Naive thymus-derived CD4-positive, alpha-beta T cell (primary cell): ENCODE measurements at regions of chr5 and their contacts with region 1.

Region 1: DNA sequence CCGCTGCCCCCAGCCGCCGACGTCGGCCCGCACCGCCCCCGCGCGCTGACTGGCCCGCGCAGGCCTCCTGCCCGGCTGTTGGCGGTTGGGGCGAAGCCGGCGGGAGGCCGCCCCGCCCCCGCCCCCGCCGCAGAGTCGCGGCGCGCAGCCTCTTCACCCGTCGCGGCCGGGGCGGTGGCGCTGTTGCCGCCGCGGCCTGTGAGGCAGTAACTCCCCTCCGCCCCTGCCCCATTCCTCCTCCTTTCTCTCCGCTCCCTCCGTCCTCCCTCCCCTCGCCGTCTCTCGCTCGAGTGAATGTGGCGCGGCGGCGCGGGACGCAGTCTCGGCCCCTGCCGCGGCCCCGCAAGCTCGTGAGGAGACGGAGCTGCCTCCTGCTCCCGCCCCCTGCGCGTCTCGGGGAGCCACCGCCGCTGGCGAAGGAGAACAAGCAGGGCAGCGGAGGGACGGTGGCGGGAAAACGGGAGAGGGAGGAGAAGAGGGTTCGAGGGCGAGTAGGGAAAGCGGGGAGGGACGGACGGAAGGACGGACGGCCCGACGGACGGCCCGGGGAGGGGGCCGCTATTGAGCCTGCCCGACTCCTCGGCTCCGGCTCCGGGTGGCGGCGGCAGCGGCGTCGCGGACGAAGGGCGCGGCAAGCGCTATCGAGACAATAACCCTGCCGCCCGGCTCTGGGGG is 637 bp upstream of the ERBIN start:
- DNase-seq: peak; percentile 72 to 85 (median 81)
- ATAC-seq: peak; percentile 87
- H3K4me3 ChIP-seq: peak overlapping the region; percentile 81
- H3K4me3 Mint-ChIP-seq: peak overlapping the region; percentile 88 to 98 (median 93)
- H3K27ac ChIP-seq: peak overlapping the region; percentile 96
- H3K27ac Mint-ChIP-seq: peak overlapping the region; percentile 64 to 97 (median 95)
- H3K4me1 ChIP-seq: peaks cover 17 to 19% of the 10 kb centered on the region in 2 donors
- H3K4me1 Mint-ChIP-seq: peaks cover 29 to 43% (median 40%) of the 10 kb centered on the region in 7 donors
- H3K27me3 ChIP-seq: no peaks in the 10 kb centered on the region
- H3K27me3 Mint-ChIP-seq: peaks cover 0 to 29% (median 0%) of the 10 kb centered on the region in 5 donors

Region 2: GRCh38 chr5:65252977-65253376 is 672.8 kb before region 1 on chr5:
- CTCF ChIA-PET with region 1: no interaction called
- POLR2A ChIA-PET with region 1: no interaction called
- intact Hi-C with region 1: no loop called
- DNase-seq: no peak
- ATAC-seq: no peak
- H3K4me3 ChIP-seq: no peak overlapping the region
- H3K4me3 Mint-ChIP-seq: no peak overlapping the region
- H3K27ac ChIP-seq: no peak overlapping the region
- H3K27ac Mint-ChIP-seq: no peak overlapping the region
- H3K4me1 ChIP-seq: no peaks in the 10 kb centered on the region
- H3K4me1 Mint-ChIP-seq: no peaks in the 10 kb centered on the region
- H3K27me3 ChIP-seq: no peaks in the 10 kb centered on the region
- H3K27me3 Mint-ChIP-seq: no peaks in the 10 kb centered on the region

Region 3: GRCh38 chr5:65624571-65625555 is 300.9 kb before region 1 on chr5 and contains the starts of genes SHLD3 and TRAPPC13:
- CTCF ChIA-PET with region 1: no interaction called
- POLR2A ChIA-PET with region 1: interaction called, 4 read pairs
- intact Hi-C with region 1: loop called (anchors 1 kb)
- DNase-seq: peak; percentile 57 to 92 (median 91)
- ATAC-seq: peak; percentile 86
- H3K4me3 ChIP-seq: peak within 1 kb of the TSS; percentile 75
- H3K4me3 Mint-ChIP-seq: peak within 1 kb of the TSS; percentile 93 to 100 (median 98)
- H3K27ac ChIP-seq: peak within 1 kb of the TSS; percentile 92
- H3K27ac Mint-ChIP-seq: peak within 1 kb of the TSS; percentile 97 to 100 (median 98)
- H3K4me1 ChIP-seq: peaks cover 20% of the 10 kb centered on the region in 2 donors
- H3K4me1 Mint-ChIP-seq: peaks cover 14 to 73% (median 51%) of the 10 kb centered on the region in 7 donors
- H3K27me3 ChIP-seq: no peaks in the 10 kb centered on the region
- H3K27me3 Mint-ChIP-seq: peaks cover 0 to 3% (median 0%) of the 10 kb centered on the region in 5 donors
- total RNA-seq, gene SHLD3: 4.8 to 11.3 (median 5.8) TPM
- total RNA-seq, gene TRAPPC13: 18.2 to 23.1 (median 20.8) TPM

Region 4: GRCh38 chr5:65779643-65780042 is 146.1 kb before region 1 on chr5:
- CTCF ChIA-PET with region 1: no interaction called
- POLR2A ChIA-PET with region 1: interaction called, 3 read pairs
- intact Hi-C with region 1: loop called (anchors 2 to 5 kb)
- DNase-seq: peak in 4 of 9 donors; percentile 10 to 28 (median 16)
- ATAC-seq: peak; percentile 29
- H3K4me3 ChIP-seq: no peak overlapping the region
- H3K4me3 Mint-ChIP-seq: peak overlapping the region; percentile 40 to 71 (median 56)
- H3K27ac ChIP-seq: no peak overlapping the region
- H3K27ac Mint-ChIP-seq: peak overlapping the region; percentile 24 to 91 (median 78)
- H3K4me1 ChIP-seq: peaks cover 0 to 9% of the 10 kb centered on the region in 2 donors
- H3K4me1 Mint-ChIP-seq: peaks cover 17 to 29% (median 24%) of the 10 kb centered on the region in 7 donors
- H3K27me3 ChIP-seq: no peaks in the 10 kb centered on the region
- H3K27me3 Mint-ChIP-seq: no peaks in the 10 kb centered on the region

Region 5: DNA sequence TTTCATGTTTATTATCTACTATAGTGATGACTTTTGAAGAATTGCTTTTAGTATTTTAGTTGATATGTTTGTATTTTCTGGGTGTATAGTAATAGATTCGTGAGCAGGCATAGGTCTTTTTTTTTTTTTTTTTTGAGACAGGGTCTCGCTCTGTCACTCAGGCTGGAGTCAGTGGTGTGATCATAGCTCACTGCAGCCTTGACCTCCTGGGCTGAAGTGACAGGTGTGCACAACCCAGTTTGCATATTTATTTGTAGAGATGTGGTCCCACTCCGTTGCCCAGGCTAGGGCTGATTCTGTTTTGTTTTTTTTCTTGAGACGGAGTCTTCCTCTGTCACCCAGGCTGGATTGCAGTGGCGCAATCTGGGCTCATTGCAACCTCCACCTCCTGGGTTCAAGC is 12.5 kb after region 1 on chr5:
- CTCF ChIA-PET with region 1: interaction called, 4 read pairs
- POLR2A ChIA-PET with region 1: interaction called, 6 read pairs
- intact Hi-C with region 1: loop called in 1 of 2 experiments (anchors 1 kb)
- DNase-seq: no peak
- ATAC-seq: no peak
- H3K4me3 ChIP-seq: no peak overlapping the region
- H3K4me3 Mint-ChIP-seq: peak overlapping the region in 4 of 10 donors; percentile 10 to 54 (median 38)
- H3K27ac ChIP-seq: no peak overlapping the region
- H3K27ac Mint-ChIP-seq: peak overlapping the region in 7 of 9 donors; percentile 2 to 72 (median 55)
- H3K4me1 ChIP-seq: peaks cover 18 to 24% of the 10 kb centered on the region in 2 donors
- H3K4me1 Mint-ChIP-seq: peaks cover 19 to 77% (median 54%) of the 10 kb centered on the region in 7 donors
- H3K27me3 ChIP-seq: no peaks in the 10 kb centered on the region
- H3K27me3 Mint-ChIP-seq: no peaks in the 10 kb centered on the region

Region 6: GRCh38 chr5:65967288-65968066 is 41.7 kb after region 1 on chr5:
- CTCF ChIA-PET with region 1: no interaction called
- POLR2A ChIA-PET with region 1: interaction called, 6 read pairs
- intact Hi-C with region 1: loop called in 1 of 2 experiments (anchors 5 kb)
- DNase-seq: peak in 1 of 9 donors; percentile 11
- ATAC-seq: peak; percentile 22
- H3K4me3 ChIP-seq: no peak overlapping the region
- H3K4me3 Mint-ChIP-seq: peak overlapping the region in 9 of 10 donors; percentile 4 to 74 (median 49)
- H3K27ac ChIP-seq: no peak overlapping the region
- H3K27ac Mint-ChIP-seq: peak overlapping the region in 7 of 9 donors; percentile 19 to 81 (median 68)
- H3K4me1 ChIP-seq: peaks cover 33 to 39% of the 10 kb centered on the region in 2 donors
- H3K4me1 Mint-ChIP-seq: peaks cover 46 to 92% (median 66%) of the 10 kb centered on the region in 7 donors
- H3K27me3 ChIP-seq: no peaks in the 10 kb centered on the region
- H3K27me3 Mint-ChIP-seq: no peaks in the 10 kb centered on the region

Region 7: GRCh38 chr5:66171349-66172344 is 245.9 kb after region 1 on chr5:
- CTCF ChIA-PET with region 1: no interaction called
- POLR2A ChIA-PET with region 1: interaction called, 3 read pairs
- intact Hi-C with region 1: loop called (anchors 1 to 10 kb)
- DNase-seq: peak in 7 of 9 donors; percentile 69 to 85 (median 80)
- ATAC-seq: peak; percentile 89
- H3K4me3 ChIP-seq: no peak overlapping the region
- H3K4me3 Mint-ChIP-seq: peak overlapping the region in 6 of 10 donors; percentile 5 to 48 (median 38)
- H3K27ac ChIP-seq: peak overlapping the region; percentile 43
- H3K27ac Mint-ChIP-seq: peak overlapping the region; percentile 69 to 93 (median 90)
- H3K4me1 ChIP-seq: peaks cover 7 to 8% of the 10 kb centered on the region in 2 donors
- H3K4me1 Mint-ChIP-seq: peaks cover 9 to 39% (median 28%) of the 10 kb centered on the region in 7 donors
- H3K27me3 ChIP-seq: no peaks in the 10 kb centered on the region
- H3K27me3 Mint-ChIP-seq: no peaks in the 10 kb centered on the region

Region 8: GRCh38 chr5:66209350-66209749 is 283.6 kb after region 1 on chr5:
- CTCF ChIA-PET with region 1: no interaction called
- POLR2A ChIA-PET with region 1: no interaction called
- intact Hi-C with region 1: no loop called
- DNase-seq: no peak
- ATAC-seq: no peak
- H3K4me3 ChIP-seq: no peak overlapping the region
- H3K4me3 Mint-ChIP-seq: no peak overlapping the region
- H3K27ac ChIP-seq: no peak overlapping the region
- H3K27ac Mint-ChIP-seq: no peak overlapping the region
- H3K4me1 ChIP-seq: no peaks in the 10 kb centered on the region
- H3K4me1 Mint-ChIP-seq: peaks cover 0 to 2% (median 0%) of the 10 kb centered on the region in 7 donors
- H3K27me3 ChIP-seq: no peaks in the 10 kb centered on the region
- H3K27me3 Mint-ChIP-seq: no peaks in the 10 kb centered on the region

Region 9: GRCh38 chr5:66324357-66324756 is 398.6 kb after region 1 on chr5:
- CTCF ChIA-PET with region 1: no interaction called
- POLR2A ChIA-PET with region 1: no interaction called
- intact Hi-C with region 1: no loop called
- DNase-seq: no peak
- ATAC-seq: no peak
- H3K4me3 ChIP-seq: no peak overlapping the region
- H3K4me3 Mint-ChIP-seq: no peak overlapping the region
- H3K27ac ChIP-seq: no peak overlapping the region
- H3K27ac Mint-ChIP-seq: no peak overlapping the region
- H3K4me1 ChIP-seq: no peaks in the 10 kb centered on the region
- H3K4me1 Mint-ChIP-seq: peaks cover 0 to 1% (median 0%) of the 10 kb centered on the region in 7 donors
- H3K27me3 ChIP-seq: no peaks in the 10 kb centered on the region
- H3K27me3 Mint-ChIP-seq: peaks cover 0 to 30% (median 12%) of the 10 kb centered on the region in 5 donors